Activated CD4-positive, alpha-beta T cell treated with anti-CD3 and anti-CD28 coated beads for 36 hours (primary cell): ENCODE measurements at regions of chr2 and their contacts with region 1.

Region 1: GRCh38 chr2:213119061-213119856 is 32.2 kb downstream of the IKZF2 start:
- DNase-seq: peak; percentile 45
- ATAC-seq: peak; percentile 92
- H3K4me3 Mint-ChIP-seq: peak overlapping the region; percentile 19
- H3K27ac Mint-ChIP-seq: peak overlapping the region; percentile 84
- H3K4me1 Mint-ChIP-seq: peaks cover 55% of the 10 kb centered on the region
- H3K27me3 Mint-ChIP-seq: no peaks in the 10 kb centered on the region

Region 2: GRCh38 chr2:213034585-213034984 is 84.7 kb before region 1 on chr2:
- CTCF ChIA-PET with region 1: no interaction called
- POLR2A ChIA-PET with region 1: no interaction called
- intact Hi-C with region 1: loop called in 1 of 2 experiments (anchors 1 kb)
- DNase-seq: no peak
- ATAC-seq: peak; percentile 64
- H3K4me3 Mint-ChIP-seq: no peak overlapping the region
- H3K27ac Mint-ChIP-seq: no peak overlapping the region
- H3K4me1 Mint-ChIP-seq: peaks cover 39% of the 10 kb centered on the region
- H3K27me3 Mint-ChIP-seq: peaks cover 1% of the 10 kb centered on the region

Region 3: DNA sequence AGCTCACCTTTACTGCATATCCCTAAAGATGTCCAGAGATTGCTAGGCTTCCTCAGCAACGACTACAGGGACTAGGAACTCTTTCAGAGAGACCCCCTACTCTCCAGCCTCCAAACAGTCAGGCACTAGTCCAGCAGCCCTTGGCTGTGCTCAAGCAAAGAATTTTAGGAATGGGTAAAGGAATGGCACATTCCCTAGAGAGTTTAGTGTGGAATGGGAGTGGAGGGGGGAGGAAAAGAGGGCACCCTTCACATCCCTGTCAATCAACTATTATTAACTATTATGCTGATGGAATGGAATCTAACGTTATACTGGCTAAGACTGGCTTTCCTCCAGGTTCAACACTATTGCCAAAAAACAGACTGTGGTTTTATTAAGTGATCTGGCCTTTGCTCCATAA is 32.7 kb before region 1 on chr2:
- CTCF ChIA-PET with region 1: no interaction called
- POLR2A ChIA-PET with region 1: no interaction called
- intact Hi-C with region 1: loop called in 1 of 2 experiments (anchors 2 kb)
- DNase-seq: no peak
- ATAC-seq: no peak
- H3K4me3 Mint-ChIP-seq: no peak overlapping the region
- H3K27ac Mint-ChIP-seq: no peak overlapping the region
- H3K4me1 Mint-ChIP-seq: peaks cover 7% of the 10 kb centered on the region
- H3K27me3 Mint-ChIP-seq: no peaks in the 10 kb centered on the region